Transverse colon (tissue), 4 donors: ENCODE measurements at regions of chr2 and their contacts with region 1.

Region 1: DNA sequence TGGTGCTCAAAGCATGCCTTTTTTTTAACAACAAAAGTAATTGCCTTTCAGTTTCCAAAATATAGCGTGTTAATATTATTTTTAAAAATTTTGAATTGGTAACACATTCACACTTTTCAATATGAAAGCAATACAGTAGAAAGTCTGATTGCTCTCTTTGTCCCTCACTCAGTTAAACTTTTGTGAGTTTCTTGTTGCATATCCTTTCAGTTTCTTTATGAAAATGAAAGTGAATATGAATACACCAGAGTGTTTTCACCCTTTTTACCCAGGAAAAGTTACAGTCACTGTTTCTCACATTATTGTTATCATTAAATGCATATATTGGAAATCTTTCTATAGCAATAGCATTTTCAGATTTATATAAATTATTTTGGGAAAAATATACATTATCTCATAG is 377.4 kb upstream of the CRIM1 start:
- DNase-seq: no peak
- H3K4me3 ChIP-seq: no peak overlapping the region
- H3K27ac ChIP-seq: no peak overlapping the region
- H3K4me1 ChIP-seq: no peaks in the 10 kb centered on the region
- H3K27me3 ChIP-seq: no peaks in the 10 kb centered on the region
- CTCF ChIP-seq: no peak
- EP300 ChIP-seq: no peak
- POLR2A ChIP-seq: no peak

Region 2: GRCh38 chr2:35946478-35946877 is 31.7 kb before region 1 on chr2:
- in situ Hi-C with region 1: no loop called
- intact Hi-C with region 1: no loop called
- DNase-seq: peak; percentile 62
- H3K4me3 ChIP-seq: no peak overlapping the region
- H3K27ac ChIP-seq: peak overlapping the region; percentile 13 to 60 (median 32)
- H3K4me1 ChIP-seq: peaks cover 0 to 18% (median 5%) of the 10 kb centered on the region in 4 donors
- H3K27me3 ChIP-seq: no peaks in the 10 kb centered on the region
- CTCF ChIP-seq: no peak
- EP300 ChIP-seq: no peak
- POLR2A ChIP-seq: no peak

Region 3: DNA sequence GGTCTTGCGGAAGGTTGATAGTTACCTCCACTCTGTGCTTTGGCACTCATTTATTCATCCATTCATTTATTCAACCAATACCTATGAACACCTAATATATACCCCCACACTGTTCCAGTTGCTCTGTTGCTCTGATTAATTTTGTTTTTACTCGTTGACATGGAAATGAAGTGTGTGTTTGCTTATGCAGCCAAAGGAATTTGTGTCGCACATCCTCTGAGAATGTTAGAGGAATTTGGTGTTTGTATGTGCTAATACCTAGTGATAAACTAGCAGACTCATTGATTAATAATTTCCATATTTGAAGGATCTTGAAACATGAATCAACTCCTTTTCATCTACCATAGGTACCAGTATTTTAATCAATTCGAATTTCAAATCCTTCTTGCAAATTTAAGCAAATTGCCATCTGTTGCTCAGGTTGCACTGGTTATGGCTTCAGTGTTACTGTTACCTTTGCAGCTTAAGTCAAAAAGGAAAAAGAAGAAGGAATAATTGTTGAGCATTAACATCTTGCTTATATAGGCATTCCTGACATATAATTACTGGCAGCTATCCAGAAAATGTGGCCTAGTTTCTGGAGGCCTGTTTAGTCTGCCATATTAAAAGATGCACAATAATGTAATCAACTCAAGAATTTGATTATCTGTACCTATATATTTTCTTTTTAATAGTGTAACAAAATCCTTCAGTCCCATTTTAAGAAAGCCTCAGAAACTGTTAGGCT is 351.7 kb after region 1 on chr2:
- in situ Hi-C with region 1: loop called in 1 of 4 experiments (anchors 25 kb)
- intact Hi-C with region 1: no loop called
- DNase-seq: no peak
- H3K4me3 ChIP-seq: no peak overlapping the region
- H3K27ac ChIP-seq: no peak overlapping the region
- H3K4me1 ChIP-seq: no peaks in the 10 kb centered on the region
- H3K27me3 ChIP-seq: no peaks in the 10 kb centered on the region
- CTCF ChIP-seq: no peak
- EP300 ChIP-seq: no peak
- POLR2A ChIP-seq: no peak